IMR-90 (cell line): ENCODE measurements at regions of chr9 and their contacts with region 1.

Region 1: GRCh38 chr9:100129772-100130171 is 30.7 kb downstream of the INVS start:
- DNase-seq: no peak
- ATAC-seq: peak; percentile 86
- H3K4me3 ChIP-seq: no peak overlapping the region
- H3K27ac ChIP-seq: no peak overlapping the region
- H3K4me1 ChIP-seq: peaks cover 3% of the 10 kb centered on the region; the same call in 1 of the 2 replicates
- H3K27me3 ChIP-seq: no peaks in the 10 kb centered on the region
- CTCF ChIP-seq: no peak
- POLR2A ChIP-seq: no peak
- RAD21 ChIP-seq: no peak

Region 2: GRCh38 chr9:100084734-100085133 is 45.0 kb before region 1 on chr9:
- CTCF ChIA-PET with region 1: no interaction called
- POLR2A ChIA-PET with region 1: no interaction called
- dilution Hi-C with region 1: no loop called
- in situ Hi-C with region 1: no loop called
- intact Hi-C with region 1: loop called (anchors 10 kb)
- DNase-seq: no peak
- ATAC-seq: no peak
- H3K4me3 ChIP-seq: no peak overlapping the region
- H3K27ac ChIP-seq: no peak overlapping the region
- H3K4me1 ChIP-seq: peaks cover 9% of the 10 kb centered on the region
- H3K27me3 ChIP-seq: no peaks in the 10 kb centered on the region
- CTCF ChIP-seq: no peak
- POLR2A ChIP-seq: no peak
- RAD21 ChIP-seq: no peak

Region 3: DNA sequence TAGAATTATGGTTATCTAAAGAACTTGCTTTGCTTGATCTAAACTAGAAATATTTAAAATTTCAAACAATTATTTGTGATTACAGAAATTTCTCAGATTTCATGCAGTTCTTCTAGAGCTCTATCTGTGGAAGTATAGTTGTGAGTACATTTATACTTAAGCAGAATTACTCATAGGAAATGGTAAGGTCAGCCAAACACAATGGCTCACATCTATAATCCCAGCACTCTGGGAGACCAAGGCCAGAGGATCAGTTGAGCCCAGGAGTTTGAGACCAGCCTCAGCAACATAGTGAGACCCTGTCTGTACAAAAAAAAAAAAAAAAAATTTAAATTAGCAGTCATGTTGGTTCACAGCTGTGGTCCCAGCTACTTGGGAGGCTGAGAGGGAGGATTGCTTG is 40.3 kb after region 1 on chr9:
- CTCF ChIA-PET with region 1: no interaction called
- POLR2A ChIA-PET with region 1: no interaction called
- dilution Hi-C with region 1: no loop called
- in situ Hi-C with region 1: no loop called
- intact Hi-C with region 1: loop called (anchors 10 kb)
- DNase-seq: peak; percentile 43
- ATAC-seq: peak; percentile 47; the same call in 1 of the 2 replicates
- H3K4me3 ChIP-seq: no peak overlapping the region
- H3K27ac ChIP-seq: no peak overlapping the region
- H3K4me1 ChIP-seq: peaks cover 3% of the 10 kb centered on the region
- H3K27me3 ChIP-seq: no peaks in the 10 kb centered on the region
- CTCF ChIP-seq: no peak
- POLR2A ChIP-seq: no peak
- RAD21 ChIP-seq: no peak

Region 4: GRCh38 chr9:100294341-100294740 is 164.6 kb after region 1 on chr9:
- CTCF ChIA-PET with region 1: no interaction called
- POLR2A ChIA-PET with region 1: no interaction called
- dilution Hi-C with region 1: no loop called
- in situ Hi-C with region 1: no loop called
- intact Hi-C with region 1: loop called (anchors 10 kb)
- DNase-seq: peak; percentile 65
- ATAC-seq: no peak
- H3K4me3 ChIP-seq: no peak overlapping the region
- H3K27ac ChIP-seq: no peak overlapping the region
- H3K4me1 ChIP-seq: no peaks in the 10 kb centered on the region
- H3K27me3 ChIP-seq: no peaks in the 10 kb centered on the region
- CTCF ChIP-seq: no peak
- POLR2A ChIP-seq: no peak
- RAD21 ChIP-seq: no peak